Left cardiac atrium (tissue), 4 donors: ENCODE measurements at regions of chr16 and their contacts with region 1.

Region 1: DNA sequence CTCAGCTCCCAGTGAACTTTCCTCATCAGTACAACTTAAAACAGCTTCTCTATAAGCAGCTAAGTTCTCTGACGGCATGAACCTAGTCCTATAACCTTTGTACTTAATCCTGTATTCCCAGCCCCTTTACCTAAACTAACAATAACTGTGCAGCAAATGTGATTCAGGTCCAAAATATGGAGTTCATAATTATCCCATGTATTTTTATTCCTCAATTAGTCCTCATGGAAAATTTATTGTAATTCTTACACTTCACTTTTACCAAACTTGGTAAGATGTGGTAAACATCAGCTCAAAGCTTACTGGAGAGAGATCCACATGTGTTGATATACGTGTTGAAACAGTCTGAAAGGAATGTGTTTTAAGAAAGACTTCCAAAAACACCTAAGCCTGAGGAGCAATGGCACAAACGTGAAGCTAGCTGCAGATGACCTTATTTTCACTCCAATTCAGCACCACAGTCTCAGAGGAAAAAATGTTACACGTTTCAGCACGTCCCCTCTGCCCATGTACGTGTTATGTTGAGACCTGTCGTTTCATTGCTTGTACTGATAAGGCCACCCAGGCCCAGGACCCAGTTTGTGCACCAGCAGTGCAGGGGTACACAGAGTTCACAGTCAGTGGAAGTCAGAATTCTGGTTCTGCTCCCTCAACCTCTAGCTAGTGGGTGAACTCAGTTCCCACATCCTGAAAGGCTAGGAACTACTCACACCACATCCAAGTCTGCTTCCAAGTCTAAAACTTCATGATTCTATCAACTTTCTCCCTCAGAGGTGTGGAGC is 7.1 kb downstream of the USP31 start:
- DNase-seq: no peak
- ATAC-seq: peak; percentile 55 to 62

Region 2: GRCh38 chr16:23026784-23027362 is 115.3 kb before region 1 on chr16:
- intact Hi-C with region 1: no loop called
- DNase-seq: no peak
- ATAC-seq: no peak

Region 3: DNA sequence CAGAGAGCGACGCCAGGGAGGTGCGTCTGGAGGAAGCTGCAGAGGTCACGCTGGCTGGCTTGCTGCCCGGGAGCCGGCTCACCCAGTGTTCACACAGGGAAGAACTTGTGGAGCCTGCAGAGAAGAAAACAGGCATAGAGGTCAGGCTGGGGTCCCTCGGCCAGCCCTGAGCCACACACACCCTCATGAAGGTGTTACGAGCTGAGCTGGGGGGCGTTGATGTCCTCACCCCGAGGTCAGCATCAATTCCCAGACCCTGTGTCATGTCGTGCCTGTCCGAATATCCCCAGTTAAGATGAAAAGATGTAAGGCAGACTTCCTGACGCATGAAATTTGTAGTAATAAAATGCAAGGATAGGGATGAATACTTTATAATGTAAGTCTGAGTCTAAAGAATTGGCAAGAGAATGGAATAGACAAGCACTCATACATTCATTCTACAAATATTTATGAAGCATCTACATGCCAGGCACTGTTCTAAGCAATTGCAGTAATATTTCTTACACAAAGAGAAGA is 70.0 kb before region 1 on chr16:
- intact Hi-C with region 1: loop called (anchors 5 kb)
- DNase-seq: peak; percentile 91
- ATAC-seq: peak; percentile 75 to 88

Region 4: GRCh38 chr16:23081675-23082119 is 60.5 kb before region 1 on chr16:
- intact Hi-C with region 1: loop called in 1 of 2 experiments (anchors 2 kb)
- DNase-seq: no peak
- ATAC-seq: peak in 1 of 2 donors; percentile 66